ENCODE measurements at regions of chr2 and their contacts with region 1.

Region 1: DNA sequence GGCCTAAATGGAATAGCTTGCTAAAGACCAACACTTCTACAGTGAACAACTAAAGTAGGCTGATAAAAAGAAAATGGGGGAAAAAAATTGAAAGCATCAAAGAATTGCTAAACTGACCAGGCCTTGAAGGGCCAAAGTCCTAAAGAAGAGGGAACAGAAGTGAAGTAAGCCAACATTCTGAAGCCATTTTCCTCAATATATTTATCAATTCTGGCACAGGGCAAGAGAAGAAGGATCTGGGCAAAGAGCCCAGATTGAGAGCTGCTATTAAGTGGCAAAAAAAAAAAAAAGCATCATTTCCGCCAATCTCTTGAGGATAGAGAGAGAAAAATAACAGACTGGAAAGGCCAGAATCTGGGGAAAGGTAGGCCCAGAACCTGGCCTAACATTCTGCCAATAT is 25.7 kb downstream of the FANCL start:
- DNase-seq: no peak
- H3K4me3 ChIP-seq: no peak overlapping the region
- H3K27ac ChIP-seq: no peak overlapping the region
- H3K4me1 ChIP-seq: no peaks in the 10 kb centered on the region
- H3K27me3 ChIP-seq: no peaks in the 10 kb centered on the region
- CTCF ChIP-seq: no peak
- EP300 ChIP-seq: no peak
- POLR2A ChIP-seq: no peak

Region 2: GRCh38 chr2:58182527-58182926 is 32.9 kb before region 1 on chr2:
- in situ Hi-C with region 1: no loop called
- intact Hi-C with region 1: loop called (anchors 2 kb)
- DNase-seq: no peak
- H3K4me3 ChIP-seq: no peak overlapping the region
- H3K27ac ChIP-seq: no peak overlapping the region
- H3K4me1 ChIP-seq: no peaks in the 10 kb centered on the region
- H3K27me3 ChIP-seq: no peaks in the 10 kb centered on the region
- CTCF ChIP-seq: no peak
- EP300 ChIP-seq: no peak
- POLR2A ChIP-seq: no peak

Measured in transverse colon (tissue), 4 donors.